Gastrocnemius medialis (tissue), 4 donors: ENCODE measurements at regions of chr17 and their contacts with region 1.

Region 1: DNA sequence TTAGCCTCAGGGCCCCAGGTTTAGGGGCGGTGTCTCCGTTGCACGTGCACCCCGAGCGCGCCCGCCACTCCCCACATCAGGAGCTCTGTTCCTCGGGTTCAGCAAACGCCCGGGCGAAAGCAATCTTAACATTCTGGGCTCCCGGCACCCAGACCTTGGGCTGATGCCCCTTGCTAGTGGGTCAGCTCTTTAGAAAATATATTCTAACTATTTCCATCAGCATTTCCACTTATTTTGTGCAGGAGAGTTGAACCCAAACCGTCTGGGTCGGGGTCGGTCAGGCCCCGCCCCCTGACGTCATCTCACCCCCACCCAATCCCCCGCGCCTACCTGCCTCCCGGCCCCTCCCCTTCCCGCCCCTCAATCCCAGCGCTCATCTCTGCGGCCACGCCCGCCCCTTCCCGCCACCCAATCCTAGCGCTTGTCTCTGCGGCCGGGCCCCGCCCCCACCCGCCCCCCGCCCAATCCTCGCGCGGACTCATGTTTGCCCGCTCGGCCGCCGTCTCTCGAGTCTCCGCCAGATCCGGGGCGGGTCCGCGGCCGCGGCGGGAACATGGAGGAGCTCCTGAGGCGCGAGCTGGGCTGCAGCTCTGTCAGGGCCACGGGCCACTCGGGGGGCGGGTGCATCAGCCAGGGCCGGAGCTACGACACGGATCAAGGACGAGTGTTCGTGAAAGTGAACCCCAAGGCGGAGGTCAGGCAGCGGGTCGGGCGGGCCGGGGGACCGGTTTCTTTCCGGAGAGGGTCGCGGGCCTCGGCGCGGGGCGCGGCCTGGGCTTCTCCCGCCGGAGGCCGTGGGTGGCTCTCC is at the start of gene FN3KRP:
- DNase-seq: peak; percentile 94 to 95
- ATAC-seq: peak; percentile 86 to 93
- H3K4me3 ChIP-seq: peak within 1 kb of the TSS; percentile 56 to 76 (median 70)
- H3K27ac ChIP-seq: peak within 1 kb of the TSS; percentile 67 to 85 (median 78)
- H3K4me1 ChIP-seq: peaks cover 26 to 27% of the 10 kb centered on the region in 2 donors
- H3K27me3 ChIP-seq: no peaks in the 10 kb centered on the region
- CTCF ChIP-seq: no peak
- POLR2A ChIP-seq: peak; percentile 46 to 60
- total RNA-seq, gene FN3KRP: 2.3 to 7.9 (median 3.9) TPM

Region 2: DNA sequence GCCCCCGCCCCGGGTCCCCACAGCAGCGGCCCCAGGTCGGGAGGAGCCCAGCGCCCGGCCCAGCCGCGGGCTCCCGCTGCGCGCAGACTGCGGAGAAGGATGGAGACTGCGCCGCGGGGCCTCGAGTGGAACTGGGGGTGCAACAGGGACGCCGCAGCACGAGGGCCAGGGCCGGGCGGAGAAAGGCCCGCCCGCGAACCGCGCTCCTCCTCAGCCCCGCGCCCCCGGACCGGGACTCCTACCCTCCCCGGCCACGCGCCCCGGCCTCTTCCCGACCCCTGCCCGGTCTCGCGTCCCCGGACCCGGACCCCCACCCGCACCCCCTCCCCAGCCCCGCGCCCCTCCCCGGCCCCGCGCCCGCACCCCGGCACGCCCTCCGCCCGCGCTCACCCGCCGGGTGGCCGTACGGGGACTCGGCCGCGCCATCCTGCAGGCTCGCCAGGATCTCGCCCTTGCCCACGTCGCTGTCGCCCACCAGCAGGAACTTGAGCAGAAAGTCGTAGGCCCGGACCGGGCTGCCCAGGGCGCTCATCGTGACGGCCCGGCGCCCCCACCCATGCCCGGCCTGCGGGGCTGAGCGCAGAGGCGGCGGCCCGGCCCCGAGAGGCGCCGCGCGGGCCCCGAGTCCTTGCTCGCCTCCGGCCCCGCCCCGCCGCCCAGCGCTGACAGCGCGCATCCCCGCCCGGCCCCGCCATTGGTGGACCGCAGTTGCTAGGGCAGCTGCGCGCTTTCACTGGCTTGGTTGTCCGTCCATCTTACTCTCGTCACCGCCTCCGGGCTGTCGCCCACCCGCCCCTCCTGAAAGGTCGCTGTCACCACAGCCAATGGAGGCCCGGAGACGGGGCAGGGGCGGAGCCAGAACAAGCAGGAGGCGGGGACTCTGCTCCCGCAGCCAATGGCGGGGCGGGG is 18.1 kb before region 1 on chr17 and contains the start of gene RAB40B:
- in situ Hi-C with region 1: no loop called
- intact Hi-C with region 1: loop called (anchors 1 kb)
- DNase-seq: peak; percentile 99 to 100
- ATAC-seq: peak; percentile 96 to 99
- H3K4me3 ChIP-seq: peak within 1 kb of the TSS; percentile 67 to 96 (median 78)
- H3K27ac ChIP-seq: peak within 1 kb of the TSS; percentile 70 to 87 (median 77)
- H3K4me1 ChIP-seq: peaks cover 6 to 19% of the 10 kb centered on the region in 2 donors
- H3K27me3 ChIP-seq: no peaks in the 10 kb centered on the region
- CTCF ChIP-seq: no peak
- POLR2A ChIP-seq: peak; percentile 60 to 62
- total RNA-seq, gene RAB40B: 19.0 to 52.7 (median 24.4) TPM